Astrocyte of the cerebellum (primary cell): ENCODE measurements at regions of chr17 and their contacts with region 1.

Region 1: DNA sequence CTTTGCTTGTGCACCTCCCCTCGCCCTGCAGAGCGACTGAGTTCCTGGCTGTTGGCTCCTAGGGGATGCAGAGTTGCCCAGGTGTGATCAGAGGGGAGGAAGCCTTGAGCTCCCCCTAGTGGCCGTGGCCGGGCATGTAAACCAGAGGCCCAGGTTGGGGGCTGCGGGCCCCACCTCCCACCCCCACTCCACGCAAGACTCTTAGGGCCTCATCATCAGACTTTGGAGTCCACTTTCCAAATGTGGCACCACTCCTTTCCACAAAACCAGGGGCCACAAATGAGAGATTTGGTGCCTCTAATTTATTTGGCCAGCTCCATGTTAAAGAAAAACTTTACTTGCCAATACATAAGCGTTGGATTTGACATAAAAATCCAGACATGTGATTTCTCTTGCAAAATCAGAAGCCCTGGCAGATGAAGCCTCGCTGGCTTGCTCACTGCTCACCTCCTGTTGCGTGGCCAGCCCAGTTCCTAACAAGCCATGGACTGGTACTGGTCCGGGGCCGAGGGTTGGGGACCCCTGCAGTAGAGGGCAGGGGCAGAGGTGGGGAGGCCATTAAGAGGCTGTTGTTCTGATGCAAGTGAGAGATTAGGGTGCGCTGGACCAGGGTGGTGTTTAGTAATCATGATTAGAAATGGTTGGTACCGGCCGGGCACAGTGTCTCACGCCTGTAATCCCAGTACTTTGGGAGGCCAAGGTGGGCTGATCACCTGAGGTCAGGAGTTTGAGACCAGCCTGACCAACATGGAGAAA is 28.7 kb upstream of the GAS7 start:
- DNase-seq: no peak
- H3K4me3 ChIP-seq: no peak overlapping the region
- CTCF ChIP-seq: peak; percentile 89

Region 2: GRCh38 chr17:10292057-10292937 is 65.2 kb after region 1 on chr17:
- in situ Hi-C with region 1: loop called (anchors 5 kb)
- DNase-seq: no peak
- H3K4me3 ChIP-seq: no peak overlapping the region
- CTCF ChIP-seq: no peak